Dendritic cell treated with granulocyte-macrophage colony-stimulating factor and Interleukin-4, amounts not matched to agents 40 ng/mL and 50 ng/mL, for 4 days (primary cell): ENCODE measurements at regions of chr21 and their contacts with region 1.

Region 1: DNA sequence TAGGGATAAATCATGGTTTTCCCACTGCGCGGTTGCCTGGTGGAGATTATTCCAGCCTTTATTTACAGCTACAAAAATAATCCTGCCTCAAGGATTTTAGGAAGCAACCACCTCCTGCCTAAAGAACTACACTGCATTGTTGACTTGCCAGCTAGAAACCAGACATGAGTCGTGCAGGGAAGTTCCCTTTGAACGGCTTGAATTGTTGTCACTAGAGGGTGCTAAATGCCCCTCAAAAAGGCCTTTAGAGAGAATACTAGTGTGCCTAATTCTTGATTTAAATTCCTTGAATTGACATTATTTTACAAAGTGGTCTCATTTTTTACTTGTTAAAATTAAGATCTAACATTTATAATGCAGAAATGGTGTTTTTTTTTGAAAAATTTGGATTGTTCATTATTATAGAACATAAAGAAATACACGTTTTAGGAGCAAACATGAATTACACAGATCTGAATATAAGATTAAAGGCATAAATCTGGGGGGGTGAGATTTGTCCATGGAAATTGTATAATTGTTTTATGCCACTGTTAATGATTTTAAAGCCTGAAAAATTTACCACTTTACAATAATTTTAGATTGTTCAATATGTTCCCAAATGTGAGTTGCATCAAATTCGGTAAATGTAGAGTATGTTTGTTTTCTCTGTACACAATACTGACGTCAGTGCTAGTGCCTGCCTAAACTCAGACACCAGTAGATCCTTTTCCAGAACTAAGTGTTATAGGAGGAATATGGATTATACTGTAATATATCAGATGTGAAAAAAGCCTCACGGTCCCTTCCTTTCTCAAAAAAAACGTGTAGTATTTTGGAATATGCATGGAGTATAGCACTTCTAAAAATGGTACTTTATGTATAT is 7.6 kb upstream of the ERG start:
- H3K4me3 Mint-ChIP-seq: no peak overlapping the region
- H3K27ac Mint-ChIP-seq: peak overlapping the region; percentile 79
- H3K4me1 Mint-ChIP-seq: peaks cover 24% of the 10 kb centered on the region
- H3K27me3 Mint-ChIP-seq: peaks cover 2% of the 10 kb centered on the region

Region 2: GRCh38 chr21:38470762-38471161 is 35.1 kb before region 1 on chr21:
- intact Hi-C with region 1: no loop called
- H3K4me3 Mint-ChIP-seq: no peak overlapping the region
- H3K27ac Mint-ChIP-seq: peak overlapping the region; percentile 53
- H3K4me1 Mint-ChIP-seq: peaks cover 63% of the 10 kb centered on the region
- H3K27me3 Mint-ChIP-seq: peaks cover 8% of the 10 kb centered on the region

Region 3: GRCh38 chr21:39137248-39138178 is 631.6 kb after region 1 on chr21:
- intact Hi-C with region 1: loop called (anchors 2 kb)
- H3K4me3 Mint-ChIP-seq: no peak overlapping the region
- H3K27ac Mint-ChIP-seq: no peak overlapping the region
- H3K4me1 Mint-ChIP-seq: peaks cover 5% of the 10 kb centered on the region
- H3K27me3 Mint-ChIP-seq: peaks cover 11% of the 10 kb centered on the region

Region 4: GRCh38 chr21:39175154-39175553 is 669.3 kb after region 1 on chr21:
- intact Hi-C with region 1: loop called (anchors 10 kb)
- H3K4me3 Mint-ChIP-seq: no peak overlapping the region
- H3K27ac Mint-ChIP-seq: no peak overlapping the region
- H3K4me1 Mint-ChIP-seq: peaks cover 8% of the 10 kb centered on the region
- H3K27me3 Mint-ChIP-seq: no peaks in the 10 kb centered on the region